ENCODE measurements at regions of chr16 and their contacts with region 1.

Region 1: DNA sequence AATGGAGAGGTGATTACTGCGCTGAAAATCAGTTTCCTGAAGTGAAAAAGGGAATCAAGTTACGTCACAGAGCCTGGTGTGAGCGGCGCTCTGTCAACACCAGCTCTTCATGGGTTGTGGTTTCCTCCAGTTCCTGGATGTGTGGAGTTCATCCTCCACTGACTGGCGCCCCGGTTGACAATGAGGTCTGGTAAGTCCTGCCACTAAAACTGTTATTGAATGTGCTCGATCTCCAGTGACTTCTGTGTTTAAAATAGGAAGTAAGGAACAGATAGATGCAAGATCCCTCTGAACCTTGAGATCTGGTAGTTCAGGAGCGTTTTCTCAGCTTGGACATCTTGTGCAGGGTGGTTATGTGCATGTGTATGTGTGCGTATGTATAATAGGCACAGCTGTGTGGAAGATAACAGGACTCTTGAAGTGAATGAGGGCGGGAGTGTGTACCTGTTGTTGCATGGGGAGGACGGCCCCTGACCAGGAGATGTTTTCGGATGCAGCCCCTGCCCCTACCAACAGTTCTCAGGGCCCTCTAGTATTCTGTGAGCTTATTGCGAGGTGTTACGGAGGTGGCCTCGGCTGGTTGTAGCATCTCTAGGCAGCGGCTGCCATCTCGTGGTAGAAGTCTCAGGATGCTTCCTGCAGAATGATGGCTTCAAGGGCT is 22.0 kb upstream of the GOT2 start:
- DNase-seq: peak; percentile 62 to 67
- ATAC-seq: peak; percentile 88 to 95 (median 92)
- H3K4me3 ChIP-seq: no peak overlapping the region
- H3K27ac ChIP-seq: no peak overlapping the region
- H3K4me1 ChIP-seq: peaks cover 0 to 10% (median 0%) of the 10 kb centered on the region in 9 donors
- H3K27me3 ChIP-seq: no peaks in the 10 kb centered on the region
- CTCF ChIP-seq: peak; percentile 38 to 82 (median 71)

Region 2: DNA sequence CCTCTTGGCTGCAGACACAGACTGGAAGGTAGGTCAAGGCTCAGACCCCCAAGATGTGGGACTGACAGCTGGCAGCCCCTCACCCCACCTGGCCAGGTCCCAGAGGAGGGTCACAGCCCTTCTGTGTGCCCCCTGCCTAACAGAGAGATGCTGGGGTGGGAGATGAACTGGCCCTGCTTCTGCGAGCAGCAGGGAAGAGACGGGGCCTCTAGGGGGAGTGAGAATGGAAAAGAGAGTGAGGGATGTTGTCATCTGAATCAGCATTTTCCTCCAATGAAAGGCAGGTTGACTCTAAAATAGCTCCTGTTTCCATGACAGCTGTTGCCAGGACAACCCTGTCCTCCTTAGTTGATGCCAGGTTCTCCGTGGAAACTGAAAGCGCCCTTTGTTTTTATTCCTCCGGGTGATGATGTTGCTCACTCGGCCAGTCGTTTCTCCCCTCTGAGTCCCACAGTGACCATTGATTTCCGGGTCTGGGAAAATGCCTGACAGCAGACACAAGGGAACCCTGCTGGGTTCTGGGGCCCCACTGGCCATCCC is 261.1 kb before region 1 on chr16:
- intact Hi-C with region 1: loop called in 1 of 10 experiments (anchors 10 kb)
- DNase-seq: peak; percentile 53 to 95
- ATAC-seq: peak; percentile 48 to 83 (median 72)
- H3K4me3 ChIP-seq: peak overlapping the region in 7 of 10 donors; percentile 6 to 31 (median 13)
- H3K27ac ChIP-seq: peak overlapping the region; percentile 66 to 86 (median 80)
- H3K4me1 ChIP-seq: peaks cover 11 to 68% (median 30%) of the 10 kb centered on the region in 9 donors
- H3K27me3 ChIP-seq: peaks cover 0 to 11% (median 0%) of the 10 kb centered on the region in 7 donors
- CTCF ChIP-seq: peak in 8 of 9 donors; percentile 22 to 69 (median 56)

Region 3: DNA sequence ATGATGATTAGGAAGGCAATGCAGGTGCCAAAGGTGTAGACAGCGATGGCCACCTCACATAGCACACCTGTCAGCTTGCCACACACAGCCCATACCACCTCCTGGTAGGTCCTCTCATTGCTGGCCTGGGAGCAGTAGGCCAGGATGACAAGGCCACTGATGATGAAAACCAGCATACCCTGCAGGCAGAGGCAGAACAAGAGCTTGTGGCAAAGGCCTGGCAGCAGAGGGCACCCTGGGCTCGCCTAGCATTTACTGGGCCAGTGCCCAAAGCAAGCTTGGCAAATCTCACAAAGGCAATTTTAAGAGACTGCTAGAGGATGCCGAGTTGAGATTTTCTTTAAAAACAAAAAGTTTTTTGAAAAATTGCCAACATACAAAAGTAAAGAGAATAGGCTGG is 77.4 kb before region 1 on chr16:
- intact Hi-C with region 1: loop called (anchors 1 to 5 kb)
- DNase-seq: peak; percentile 46 to 52
- ATAC-seq: peak in 7 of 8 donors; percentile 67 to 82 (median 74)
- H3K4me3 ChIP-seq: no peak overlapping the region
- H3K27ac ChIP-seq: peak overlapping the region in 1 of 10 donors; percentile 2
- H3K4me1 ChIP-seq: peaks cover 2 to 35% (median 16%) of the 10 kb centered on the region in 9 donors
- H3K27me3 ChIP-seq: no peaks in the 10 kb centered on the region
- CTCF ChIP-seq: peak; percentile 14 to 69 (median 46)

Region 4: DNA sequence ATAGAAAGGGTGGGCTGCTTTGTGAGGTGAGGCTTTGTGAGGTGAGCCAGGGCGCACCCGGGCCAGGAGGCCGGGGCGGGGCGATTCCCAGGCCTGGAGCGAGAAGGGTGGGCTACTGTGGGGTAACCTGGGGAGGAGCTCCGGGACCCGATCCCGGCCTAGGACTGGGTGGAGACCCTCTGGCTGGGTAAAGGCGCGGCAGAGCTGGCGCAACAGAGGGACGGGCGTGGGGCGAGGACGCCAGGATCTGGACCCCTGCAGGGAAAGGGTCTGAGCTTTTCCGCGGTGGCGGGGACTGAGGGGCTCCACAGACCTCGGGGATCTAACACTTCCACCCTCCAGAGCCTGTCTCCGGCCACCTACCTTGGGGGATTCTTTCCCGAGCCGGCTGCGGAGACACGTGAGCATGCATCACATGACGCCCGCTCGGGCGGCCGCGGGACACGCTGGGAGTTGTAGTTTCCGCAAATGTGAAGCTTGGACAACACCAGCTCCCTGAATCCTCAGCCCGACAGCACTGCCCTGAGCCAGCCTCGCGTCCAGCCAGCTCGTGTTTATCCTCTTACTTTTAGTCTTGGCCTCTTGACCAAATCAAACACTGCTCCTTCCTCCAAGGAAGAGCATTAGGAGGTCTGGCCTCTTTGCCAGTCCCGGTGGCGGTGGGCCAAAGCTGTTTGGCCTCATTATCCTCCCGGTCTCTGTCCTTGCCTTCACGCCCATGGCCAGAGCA is 71.6 kb before region 1 on chr16 and contains the start of gene SLC38A7:
- intact Hi-C with region 1: loop called in 8 of 10 experiments (anchors 2 to 5 kb)
- DNase-seq: peak; percentile 89 to 90
- ATAC-seq: peak; percentile 89 to 96 (median 94)
- H3K4me3 ChIP-seq: peak within 1 kb of the TSS; percentile 71 to 94 (median 84)
- H3K27ac ChIP-seq: peak within 1 kb of the TSS; percentile 42 to 94 (median 90)
- H3K4me1 ChIP-seq: peaks cover 3 to 37% (median 25%) of the 10 kb centered on the region in 9 donors
- H3K27me3 ChIP-seq: no peaks in the 10 kb centered on the region
- CTCF ChIP-seq: no peak
- total RNA-seq, gene SLC38A7: 24.1 to 38.7 (median 31.8) TPM